Naive thymus-derived CD8-positive, alpha-beta T cell (primary cell): ENCODE measurements at regions of chr17 and their contacts with region 1.

Region 1: DNA sequence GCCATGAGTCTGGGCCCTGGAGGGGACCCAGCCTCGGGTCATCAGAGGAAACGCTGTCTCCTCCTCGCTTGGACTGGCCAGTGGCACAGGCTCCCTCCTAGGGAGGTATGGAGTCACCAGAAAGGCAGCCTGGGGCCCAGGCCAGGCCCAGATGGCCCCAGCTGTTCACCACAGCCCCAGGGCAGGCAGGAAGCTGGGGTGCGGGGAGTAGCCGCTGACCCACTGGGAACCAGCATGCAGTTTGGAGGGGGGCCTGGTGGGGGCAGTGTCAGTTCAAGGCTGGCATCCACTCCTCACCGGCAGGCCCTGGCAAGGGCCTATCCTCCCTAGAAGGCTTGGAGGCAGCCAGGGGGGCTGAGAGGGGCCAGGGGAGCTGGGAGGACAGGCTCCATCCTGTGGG is 48.8 kb downstream of the SDK2 start:
- DNase-seq: peak in 7 of 10 donors; percentile 8 to 47 (median 28)
- ATAC-seq: no peak
- H3K4me3 Mint-ChIP-seq: peak overlapping the region in 1 of 10 donors; percentile 71
- H3K27ac Mint-ChIP-seq: peak overlapping the region in 9 of 10 donors; percentile 60 to 98 (median 96)
- H3K4me1 Mint-ChIP-seq: peaks cover 35 to 74% (median 67%) of the 10 kb centered on the region in 4 donors
- H3K27me3 Mint-ChIP-seq: peaks cover 0 to 2% (median 0%) of the 10 kb centered on the region in 5 donors

Region 2: GRCh38 chr17:73429440-73430164 is 165.9 kb before region 1 on chr17:
- POLR2A ChIA-PET with region 1: interaction called, 16 read pairs
- DNase-seq: peak; percentile 72 to 93 (median 84)
- ATAC-seq: peak; percentile 97 to 99
- H3K4me3 Mint-ChIP-seq: peak overlapping the region in 6 of 10 donors; percentile 33 to 64 (median 43)
- H3K27ac Mint-ChIP-seq: peak overlapping the region in 7 of 10 donors; percentile 12 to 83 (median 43)
- H3K4me1 Mint-ChIP-seq: peaks cover 4 to 18% (median 6%) of the 10 kb centered on the region in 4 donors
- H3K27me3 Mint-ChIP-seq: no peaks in the 10 kb centered on the region

Region 3: GRCh38 chr17:73506257-73507050 is 89.0 kb before region 1 on chr17:
- POLR2A ChIA-PET with region 1: no interaction called
- DNase-seq: no peak
- ATAC-seq: no peak
- H3K4me3 Mint-ChIP-seq: no peak overlapping the region
- H3K27ac Mint-ChIP-seq: no peak overlapping the region
- H3K4me1 Mint-ChIP-seq: peaks cover 0 to 17% (median under 1%) of the 10 kb centered on the region in 4 donors
- H3K27me3 Mint-ChIP-seq: no peaks in the 10 kb centered on the region

Region 4: DNA sequence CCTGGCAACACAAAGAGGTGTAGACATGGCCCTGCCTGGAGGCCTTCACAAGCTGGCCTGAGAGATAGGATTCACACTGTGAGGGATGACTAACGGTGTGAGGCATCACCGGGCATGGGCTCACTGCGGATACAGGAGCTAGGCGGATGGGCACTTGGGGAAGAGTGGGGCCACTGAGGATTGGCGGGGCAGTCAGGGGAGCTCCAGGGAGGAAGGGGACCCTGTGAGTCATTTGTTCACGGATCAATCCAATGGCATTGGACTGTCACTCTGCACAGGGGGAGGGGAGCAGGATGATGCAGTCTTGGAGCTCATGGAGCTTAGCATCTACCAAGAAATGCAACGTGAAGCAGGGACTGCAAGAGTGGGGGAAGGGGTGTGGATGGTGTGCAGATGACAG is 68.5 kb before region 1 on chr17:
- POLR2A ChIA-PET with region 1: no interaction called
- DNase-seq: no peak
- ATAC-seq: no peak
- H3K4me3 Mint-ChIP-seq: no peak overlapping the region
- H3K27ac Mint-ChIP-seq: peak overlapping the region in 2 of 10 donors; percentile 43 to 74
- H3K4me1 Mint-ChIP-seq: peaks cover 0 to 9% (median 3%) of the 10 kb centered on the region in 4 donors
- H3K27me3 Mint-ChIP-seq: no peaks in the 10 kb centered on the region

Region 5: DNA sequence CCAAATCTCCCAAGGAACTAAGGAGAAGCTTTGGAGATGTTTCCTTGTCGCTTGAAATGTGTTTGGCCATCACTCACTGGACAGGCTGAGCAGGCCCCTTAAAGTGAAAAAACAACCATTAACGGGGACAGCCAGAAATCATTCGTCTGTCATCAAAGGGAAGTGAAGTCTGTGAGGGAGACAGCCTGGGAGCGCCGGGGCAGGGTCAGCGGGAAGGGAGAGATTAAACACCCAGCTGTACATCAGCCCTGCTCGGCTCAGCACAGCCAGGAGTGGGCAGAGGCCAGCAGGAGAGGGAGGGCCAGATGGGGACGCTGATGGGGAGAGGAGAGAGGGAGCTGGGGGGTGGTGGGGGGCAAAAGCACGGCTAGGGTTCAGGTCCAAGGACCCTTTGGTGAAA is 56.3 kb before region 1 on chr17:
- POLR2A ChIA-PET with region 1: no interaction called
- DNase-seq: no peak
- ATAC-seq: no peak
- H3K4me3 Mint-ChIP-seq: no peak overlapping the region
- H3K27ac Mint-ChIP-seq: peak overlapping the region in 4 of 10 donors; percentile 15 to 60 (median 46)
- H3K4me1 Mint-ChIP-seq: peaks cover 0 to 21% (median 5%) of the 10 kb centered on the region in 4 donors
- H3K27me3 Mint-ChIP-seq: no peaks in the 10 kb centered on the region

Region 6: DNA sequence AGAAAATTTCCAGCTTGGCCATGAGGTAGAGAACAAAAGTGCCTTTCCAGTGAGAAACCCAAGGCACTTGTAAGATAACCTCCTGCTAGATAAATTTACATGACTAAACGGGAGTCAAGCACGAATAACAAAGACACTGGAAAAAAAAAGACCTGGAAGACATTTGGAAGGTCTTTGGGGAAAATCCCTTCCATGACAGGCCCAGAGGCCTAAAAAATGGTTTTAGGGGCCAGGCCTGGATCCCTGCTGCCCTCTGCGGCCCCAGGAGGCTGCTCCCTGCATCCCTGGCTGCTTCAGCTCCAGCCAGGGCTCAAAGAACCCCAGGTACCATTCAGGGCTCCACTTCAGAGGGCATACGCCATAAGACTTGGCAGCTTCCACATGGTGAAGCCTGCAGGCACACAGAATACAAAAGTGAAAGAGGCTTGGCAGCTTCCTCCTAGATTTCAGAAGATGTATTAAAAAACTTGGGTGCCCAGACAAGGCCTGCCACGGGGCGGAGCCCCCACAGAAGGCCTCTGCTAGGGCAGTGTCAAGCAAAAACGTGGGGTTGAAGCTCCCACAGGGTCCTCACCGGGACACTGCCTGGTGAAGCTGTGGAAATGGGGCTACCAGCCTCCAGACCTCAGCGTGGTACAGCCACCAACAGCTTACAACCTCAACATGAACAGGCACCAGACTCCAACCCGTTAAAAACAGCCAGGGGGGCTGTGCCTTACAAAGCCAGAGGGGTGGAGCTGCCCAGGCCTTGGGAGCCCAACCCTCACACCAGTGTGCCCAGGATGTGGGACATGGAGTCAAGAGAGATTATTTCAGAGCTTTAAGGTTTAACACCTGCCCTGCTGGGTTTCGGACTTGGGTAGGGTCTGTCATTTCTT is 28.3 kb before region 1 on chr17:
- POLR2A ChIA-PET with region 1: interaction called, 58 read pairs
- DNase-seq: peak in 7 of 10 donors; percentile 11 to 65 (median 33)
- ATAC-seq: peak; percentile 86 to 92
- H3K4me3 Mint-ChIP-seq: peak overlapping the region; percentile 26 to 71 (median 54)
- H3K27ac Mint-ChIP-seq: peak overlapping the region; percentile 84 to 96 (median 93)
- H3K4me1 Mint-ChIP-seq: peaks cover 5 to 38% (median 27%) of the 10 kb centered on the region in 4 donors
- H3K27me3 Mint-ChIP-seq: no peaks in the 10 kb centered on the region

Region 7: GRCh38 chr17:73645050-73645978 is 49.8 kb after region 1 on chr17:
- POLR2A ChIA-PET with region 1: interaction called, 67 read pairs
- DNase-seq: peak in 9 of 10 donors; percentile 22 to 71 (median 45)
- ATAC-seq: peak; percentile 69 to 77
- H3K4me3 Mint-ChIP-seq: peak overlapping the region; percentile 46 to 90 (median 74)
- H3K27ac Mint-ChIP-seq: peak overlapping the region in 2 of 10 donors; percentile 15 to 43
- H3K4me1 Mint-ChIP-seq: peaks cover 17 to 39% (median 29%) of the 10 kb centered on the region in 4 donors
- H3K27me3 Mint-ChIP-seq: peaks cover 0 to 25% (median 2%) of the 10 kb centered on the region in 5 donors

Region 8: GRCh38 chr17:73720187-73720834 is 124.8 kb after region 1 on chr17:
- POLR2A ChIA-PET with region 1: interaction called, 14 read pairs
- DNase-seq: peak in 3 of 10 donors; percentile 19 to 72 (median 66)
- ATAC-seq: peak; percentile 13 to 16
- H3K4me3 Mint-ChIP-seq: peak overlapping the region in 3 of 10 donors; percentile 19 to 65 (median 50)
- H3K27ac Mint-ChIP-seq: peak overlapping the region in 8 of 10 donors; percentile 43 to 90 (median 68)
- H3K4me1 Mint-ChIP-seq: peaks cover 27 to 66% (median 48%) of the 10 kb centered on the region in 4 donors
- H3K27me3 Mint-ChIP-seq: peaks cover 0 to 2% (median 0%) of the 10 kb centered on the region in 5 donors

Region 9: GRCh38 chr17:73770115-73770848 is 174.8 kb after region 1 on chr17:
- POLR2A ChIA-PET with region 1: no interaction called
- DNase-seq: no peak
- ATAC-seq: no peak
- H3K4me3 Mint-ChIP-seq: no peak overlapping the region
- H3K27ac Mint-ChIP-seq: no peak overlapping the region
- H3K4me1 Mint-ChIP-seq: peaks cover 0 to 4% (median 0%) of the 10 kb centered on the region in 4 donors
- H3K27me3 Mint-ChIP-seq: no peaks in the 10 kb centered on the region